ENCODE measurements at regions of chr6 and their contacts with region 1.

Region 1: DNA sequence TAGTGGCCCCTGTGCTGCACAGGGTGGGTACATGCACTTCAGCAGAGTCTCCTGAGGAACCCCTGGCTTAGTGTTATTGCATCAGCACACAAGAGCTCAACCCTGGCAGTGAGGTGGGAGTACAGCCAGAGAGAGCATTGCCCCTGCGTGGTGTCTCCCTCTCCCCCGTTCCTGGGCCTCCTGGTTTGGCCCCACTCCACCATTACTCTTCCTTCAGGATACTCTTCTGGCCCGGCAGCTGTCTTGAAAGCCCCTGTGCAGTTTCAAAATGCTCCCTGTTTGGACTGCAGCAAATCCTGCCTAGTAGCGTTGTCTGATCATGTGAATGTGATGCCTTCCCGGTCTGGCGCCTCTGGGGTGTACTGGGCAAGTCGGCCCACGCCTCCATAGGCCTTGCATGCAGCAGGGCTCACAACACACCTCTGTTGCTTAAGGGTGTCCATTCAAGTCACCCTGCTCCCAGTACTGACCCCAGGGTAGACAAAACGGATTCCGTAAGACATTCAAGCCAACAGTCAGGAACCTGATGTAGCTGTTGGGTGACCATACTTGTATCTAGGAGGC is 32.1 kb downstream of the TXNDC5 start:
- DNase-seq: no peak
- H3K4me3 ChIP-seq: no peak overlapping the region
- H3K27ac ChIP-seq: no peak overlapping the region
- H3K4me1 ChIP-seq: no peaks in the 10 kb centered on the region
- H3K27me3 ChIP-seq: no peaks in the 10 kb centered on the region
- CTCF ChIP-seq: no peak
- POLR2A ChIP-seq: no peak

Region 2: DNA sequence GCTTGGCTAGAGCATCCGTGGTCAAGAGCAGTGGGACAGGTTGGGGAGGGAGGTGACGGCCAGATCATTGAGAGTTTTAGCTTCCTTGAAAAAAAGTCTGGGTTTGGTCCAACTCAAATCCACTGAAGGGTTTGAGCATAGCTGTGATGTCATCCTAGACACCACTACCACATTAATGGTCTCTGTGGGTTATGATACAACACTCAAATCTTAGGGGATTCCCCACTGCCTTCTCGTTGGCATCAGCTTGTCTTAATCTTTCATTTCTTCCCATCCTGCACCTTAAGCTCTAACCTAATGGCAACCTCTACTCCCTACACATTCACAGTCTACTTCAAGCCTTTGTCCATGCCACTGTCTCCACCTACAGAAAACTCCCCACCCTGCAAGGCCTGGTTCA is 75.3 kb before region 1 on chr6:
- intact Hi-C with region 1: loop called (anchors 2 kb)
- DNase-seq: no peak
- H3K4me3 ChIP-seq: no peak overlapping the region
- H3K27ac ChIP-seq: no peak overlapping the region
- H3K4me1 ChIP-seq: no peaks in the 10 kb centered on the region
- H3K27me3 ChIP-seq: no peaks in the 10 kb centered on the region
- CTCF ChIP-seq: no peak
- POLR2A ChIP-seq: no peak

Region 3: GRCh38 chr6:7910654-7911344 is 32.3 kb after region 1 on chr6 and contains the start of gene TXNDC5:
- intact Hi-C with region 1: no loop called
- DNase-seq: peak; percentile 36 to 73
- H3K4me3 ChIP-seq: peak within 1 kb of the TSS; percentile 71 to 100 (median 88)
- H3K27ac ChIP-seq: peak within 1 kb of the TSS; percentile 76 to 83
- H3K4me1 ChIP-seq: no peaks in the 10 kb centered on the region
- H3K27me3 ChIP-seq: no peaks in the 10 kb centered on the region
- CTCF ChIP-seq: no peak
- POLR2A ChIP-seq: no peak
- total RNA-seq, gene TXNDC5: 123 to 191 (median 165) TPM

Region 4: GRCh38 chr6:8108031-8108660 is 229.7 kb after region 1 on chr6:
- intact Hi-C with region 1: no loop called
- DNase-seq: no peak
- H3K4me3 ChIP-seq: no peak overlapping the region
- H3K27ac ChIP-seq: peak overlapping the region in 1 of 2 donors; percentile 23
- H3K4me1 ChIP-seq: no peaks in the 10 kb centered on the region
- H3K27me3 ChIP-seq: no peaks in the 10 kb centered on the region
- CTCF ChIP-seq: no peak
- POLR2A ChIP-seq: no peak

Measured in breast epithelium (tissue), 4 donors.